ENCODE measurements at regions of chr5 and their contacts with region 1.

Region 1: GRCh38 chr5:38382898-38383297 is 124.5 kb downstream of the EGFLAM start:
- DNase-seq: no peak

Region 2: DNA sequence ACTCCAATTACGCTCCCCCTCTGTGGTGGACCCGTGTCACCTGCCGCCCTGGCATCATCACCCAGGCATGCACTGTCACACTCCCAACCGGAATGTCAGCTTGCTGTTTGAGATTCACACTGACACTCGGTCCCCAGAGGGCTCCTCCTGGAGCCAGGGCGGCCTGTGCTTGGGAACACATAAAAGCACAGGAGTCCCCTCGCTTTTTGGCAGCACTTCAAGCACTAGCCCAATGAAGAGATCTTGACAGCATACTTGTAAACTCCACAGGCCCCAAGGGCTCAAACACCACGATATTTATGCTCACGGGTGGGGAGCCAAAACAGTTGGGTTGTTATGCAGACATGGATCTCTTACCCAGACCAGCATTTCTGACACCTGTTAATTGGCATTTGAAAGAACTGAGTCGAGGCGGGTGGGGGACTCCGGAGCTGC is 215.3 kb before region 1 on chr5:
- intact Hi-C with region 1: no loop called
- DNase-seq: no peak

Region 3: GRCh38 chr5:38433160-38433861 is 50.4 kb after region 1 on chr5:
- intact Hi-C with region 1: loop called (anchors 5 kb)
- DNase-seq: peak; percentile 74

Measured in cardiac septum (tissue), 1 donor.